ENCODE measurements at regions of chr21 and their contacts with region 1.

Region 1: DNA sequence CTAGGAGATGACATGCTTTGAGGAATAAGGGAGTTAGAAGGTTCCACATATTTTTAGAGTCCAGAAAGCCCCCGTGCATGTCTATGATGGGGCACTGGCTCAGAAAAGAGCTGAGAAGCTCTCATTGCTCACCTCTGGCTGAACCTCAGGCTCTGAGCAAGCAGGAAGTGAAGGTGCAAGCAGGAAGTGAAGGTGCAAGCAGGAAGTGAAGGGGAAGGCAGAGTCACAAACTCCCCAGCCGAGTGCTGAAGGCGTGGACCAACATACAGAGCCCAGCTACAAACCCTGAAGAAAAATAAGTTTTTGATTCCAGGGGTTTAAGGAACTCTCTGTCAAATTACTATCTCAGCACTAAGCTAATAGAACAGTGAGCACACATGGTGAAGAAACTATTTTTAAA is 7.0 kb downstream of the KRTAP10-8 start:
- DNase-seq: peak; percentile 77
- H3K4me3 Mint-ChIP-seq: peak overlapping the region; percentile 53
- H3K27ac Mint-ChIP-seq: peak overlapping the region; percentile 93
- H3K4me1 Mint-ChIP-seq: peaks cover 40% of the 10 kb centered on the region
- H3K27me3 Mint-ChIP-seq: no peaks in the 10 kb centered on the region

Region 2: GRCh38 chr21:44551340-44551961 is 67.5 kb before region 1 on chr21 and contains the start of gene KRTAP10-2:
- CTCF ChIA-PET with region 1: interaction called, 3 read pairs
- intact Hi-C with region 1: loop called (anchors 1 kb)
- DNase-seq: no peak
- H3K4me3 Mint-ChIP-seq: no peak within 1 kb of the TSS
- H3K27ac Mint-ChIP-seq: no peak within 1 kb of the TSS
- H3K4me1 Mint-ChIP-seq: peaks cover 25% of the 10 kb centered on the region
- H3K27me3 Mint-ChIP-seq: no peaks in the 10 kb centered on the region
- total RNA-seq, gene KRTAP10-2: not detected

Region 3: GRCh38 chr21:44657635-44658540 is 39.0 kb after region 1 on chr21 and contains the start of gene KRTAP12-3:
- CTCF ChIA-PET with region 1: no interaction called
- intact Hi-C with region 1: loop called (anchors 1 kb)
- DNase-seq: peak; percentile 45
- H3K4me3 Mint-ChIP-seq: peak within 1 kb of the TSS; percentile 48
- H3K27ac Mint-ChIP-seq: peak within 1 kb of the TSS; percentile 76
- H3K4me1 Mint-ChIP-seq: peaks cover 49% of the 10 kb centered on the region
- H3K27me3 Mint-ChIP-seq: no peaks in the 10 kb centered on the region
- total RNA-seq, gene KRTAP12-3: not detected